ENCODE measurements at regions of chr18 and their contacts with region 1.

Region 1: DNA sequence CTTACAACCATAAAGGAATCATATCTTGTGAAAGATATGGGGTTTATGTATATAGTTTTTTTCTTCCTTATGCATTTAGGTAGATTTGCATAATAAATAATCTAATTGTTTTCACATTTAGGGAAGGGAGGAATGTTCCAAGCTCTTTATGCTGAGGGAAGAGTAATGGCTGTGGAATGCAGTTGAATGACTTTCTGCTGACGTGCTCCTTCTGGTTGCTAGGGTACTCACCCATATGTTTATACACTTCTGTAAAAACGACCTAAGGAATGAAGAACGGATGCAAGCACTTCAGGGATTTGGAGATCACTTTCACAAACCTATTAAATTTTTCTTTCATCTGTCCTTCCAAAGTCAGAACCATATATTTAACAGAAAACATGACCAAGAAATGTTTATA is 29.2 kb upstream of the PPP4R1 start:
- DNase-seq: peak; percentile 74 to 97
- H3K4me3 ChIP-seq: peak overlapping the region; percentile 13; the same call in 1 of the 2 replicates
- H3K27ac ChIP-seq: peak overlapping the region; percentile 84
- H3K4me1 ChIP-seq: peaks cover 52% of the 10 kb centered on the region
- H3K27me3 ChIP-seq: no peaks in the 10 kb centered on the region
- CTCF ChIP-seq: no peak

Region 2: DNA sequence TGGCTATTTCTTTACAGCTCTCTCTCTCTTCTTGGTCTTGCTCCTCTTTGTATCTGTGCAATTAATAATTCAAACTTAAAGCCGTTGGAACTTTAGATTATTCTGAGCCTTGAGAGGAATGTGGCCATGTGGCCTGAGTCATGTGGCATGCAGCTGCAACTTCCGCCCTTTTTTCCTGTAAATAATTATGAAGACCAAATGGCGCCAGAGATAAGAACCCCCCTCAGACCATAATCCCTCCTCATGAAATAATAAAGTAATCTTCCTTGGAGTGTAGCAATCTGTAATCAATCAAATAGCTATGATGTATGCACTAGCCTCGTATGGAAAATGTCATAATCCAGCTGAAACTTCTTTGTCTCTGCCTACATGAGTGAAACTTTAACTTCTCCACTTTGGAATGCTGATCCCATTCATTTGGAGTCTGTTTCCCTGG is 322.5 kb before region 1 on chr18:
- CTCF ChIA-PET with region 1: no interaction called
- POLR2A ChIA-PET with region 1: no interaction called
- intact Hi-C with region 1: no loop called
- DNase-seq: no peak
- H3K4me3 ChIP-seq: no peak overlapping the region
- H3K27ac ChIP-seq: no peak overlapping the region
- H3K4me1 ChIP-seq: no peaks in the 10 kb centered on the region
- H3K27me3 ChIP-seq: no peaks in the 10 kb centered on the region
- CTCF ChIP-seq: no peak

Region 3: DNA sequence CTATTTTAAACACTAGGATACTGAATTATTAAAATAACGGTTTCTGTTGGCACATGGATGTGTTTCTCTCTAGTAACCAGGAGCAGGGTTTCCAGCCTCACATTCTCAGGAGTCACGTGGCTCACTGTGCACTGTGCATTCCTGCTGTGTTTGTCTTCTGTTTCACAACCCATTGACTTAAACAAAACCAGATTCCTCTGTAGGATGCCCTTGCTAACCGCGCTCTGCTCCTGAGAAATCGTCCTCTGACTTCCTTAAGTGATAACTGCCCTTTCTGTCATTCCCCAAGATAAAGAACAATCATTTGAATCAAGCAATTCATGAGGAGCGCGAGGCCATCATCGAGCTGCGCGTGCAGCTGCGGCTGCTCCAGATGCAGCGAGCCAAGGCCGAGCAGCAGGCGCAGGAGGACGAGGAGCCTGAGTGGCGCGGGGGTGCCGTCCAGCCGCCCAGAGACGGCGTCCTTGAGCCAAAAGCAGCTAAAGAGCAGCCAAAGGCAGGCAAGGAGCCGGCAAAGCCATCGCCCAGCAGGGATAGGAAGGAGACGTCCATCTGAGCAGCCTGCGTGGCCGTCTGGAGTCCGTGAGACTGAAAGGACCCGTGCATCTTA is 108.1 kb before region 1 on chr18:
- CTCF ChIA-PET with region 1: no interaction called
- POLR2A ChIA-PET with region 1: no interaction called
- intact Hi-C with region 1: no loop called
- DNase-seq: peak in 1 of 2 experiments; percentile 47
- H3K4me3 ChIP-seq: no peak overlapping the region
- H3K27ac ChIP-seq: no peak overlapping the region
- H3K4me1 ChIP-seq: no peaks in the 10 kb centered on the region
- H3K27me3 ChIP-seq: no peaks in the 10 kb centered on the region
- CTCF ChIP-seq: no peak

Region 4: GRCh38 chr18:9614401-9615279 is 28.9 kb before region 1 on chr18 and contains the start of gene PPP4R1:
- CTCF ChIA-PET with region 1: no interaction called
- POLR2A ChIA-PET with region 1: interaction called, 5 read pairs
- intact Hi-C with region 1: loop called (anchors 1 kb)
- DNase-seq: peak; percentile 56 to 80
- H3K4me3 ChIP-seq: peak within 1 kb of the TSS; percentile 94
- H3K27ac ChIP-seq: peak within 1 kb of the TSS; percentile 97
- H3K4me1 ChIP-seq: peaks cover 71% of the 10 kb centered on the region
- H3K27me3 ChIP-seq: no peaks in the 10 kb centered on the region
- CTCF ChIP-seq: no peak
- total RNA-seq, gene PPP4R1: 157 and 167 TPM in 2 replicates

Region 5: GRCh38 chr18:9631814-9632496 is 11.6 kb before region 1 on chr18:
- CTCF ChIA-PET with region 1: no interaction called
- POLR2A ChIA-PET with region 1: interaction called, 7 read pairs
- intact Hi-C with region 1: loop called (anchors 1 kb)
- DNase-seq: peak in 1 of 2 experiments; percentile 88
- H3K4me3 ChIP-seq: no peak overlapping the region; the same call in 1 of the 2 replicates
- H3K27ac ChIP-seq: peak overlapping the region; percentile 65
- H3K4me1 ChIP-seq: peaks cover 37% of the 10 kb centered on the region
- H3K27me3 ChIP-seq: no peaks in the 10 kb centered on the region
- CTCF ChIP-seq: no peak

Region 6: GRCh38 chr18:9661564-9661963 is 18.0 kb after region 1 on chr18:
- CTCF ChIA-PET with region 1: no interaction called
- POLR2A ChIA-PET with region 1: interaction called, 3 read pairs
- intact Hi-C with region 1: loop called (anchors 1 kb)
- DNase-seq: no peak
- H3K4me3 ChIP-seq: no peak overlapping the region
- H3K27ac ChIP-seq: no peak overlapping the region
- H3K4me1 ChIP-seq: peaks cover 35% of the 10 kb centered on the region
- H3K27me3 ChIP-seq: no peaks in the 10 kb centered on the region
- CTCF ChIP-seq: no peak

Region 7: DNA sequence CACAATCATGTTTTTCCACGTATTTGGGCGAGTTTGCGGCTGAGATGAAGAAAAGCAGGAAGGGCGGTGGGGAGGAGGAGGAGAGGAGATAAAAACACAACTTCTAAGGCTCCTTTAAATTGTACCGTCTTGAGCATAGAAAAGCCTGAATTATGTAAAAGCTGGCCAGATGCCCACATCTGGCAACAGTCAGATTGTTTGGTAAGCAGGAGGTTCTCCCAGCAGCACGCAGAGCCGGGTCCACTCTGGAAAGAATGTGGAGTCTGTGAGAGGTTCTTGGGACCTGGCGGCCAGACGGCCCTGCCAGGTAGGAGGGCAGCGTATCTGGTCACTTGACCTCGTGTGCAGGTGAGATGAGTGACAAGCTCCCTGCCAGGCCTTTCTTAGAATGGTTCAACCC is 595.6 kb after region 1 on chr18:
- CTCF ChIA-PET with region 1: no interaction called
- POLR2A ChIA-PET with region 1: no interaction called
- intact Hi-C with region 1: no loop called
- DNase-seq: no peak
- H3K4me3 ChIP-seq: no peak overlapping the region
- H3K27ac ChIP-seq: no peak overlapping the region
- H3K4me1 ChIP-seq: no peaks in the 10 kb centered on the region
- H3K27me3 ChIP-seq: no peaks in the 10 kb centered on the region
- CTCF ChIP-seq: no peak

Measured in PC-9 (cell line).